ENCODE measurements at regions of chr16 and their contacts with region 1.

Region 1: DNA sequence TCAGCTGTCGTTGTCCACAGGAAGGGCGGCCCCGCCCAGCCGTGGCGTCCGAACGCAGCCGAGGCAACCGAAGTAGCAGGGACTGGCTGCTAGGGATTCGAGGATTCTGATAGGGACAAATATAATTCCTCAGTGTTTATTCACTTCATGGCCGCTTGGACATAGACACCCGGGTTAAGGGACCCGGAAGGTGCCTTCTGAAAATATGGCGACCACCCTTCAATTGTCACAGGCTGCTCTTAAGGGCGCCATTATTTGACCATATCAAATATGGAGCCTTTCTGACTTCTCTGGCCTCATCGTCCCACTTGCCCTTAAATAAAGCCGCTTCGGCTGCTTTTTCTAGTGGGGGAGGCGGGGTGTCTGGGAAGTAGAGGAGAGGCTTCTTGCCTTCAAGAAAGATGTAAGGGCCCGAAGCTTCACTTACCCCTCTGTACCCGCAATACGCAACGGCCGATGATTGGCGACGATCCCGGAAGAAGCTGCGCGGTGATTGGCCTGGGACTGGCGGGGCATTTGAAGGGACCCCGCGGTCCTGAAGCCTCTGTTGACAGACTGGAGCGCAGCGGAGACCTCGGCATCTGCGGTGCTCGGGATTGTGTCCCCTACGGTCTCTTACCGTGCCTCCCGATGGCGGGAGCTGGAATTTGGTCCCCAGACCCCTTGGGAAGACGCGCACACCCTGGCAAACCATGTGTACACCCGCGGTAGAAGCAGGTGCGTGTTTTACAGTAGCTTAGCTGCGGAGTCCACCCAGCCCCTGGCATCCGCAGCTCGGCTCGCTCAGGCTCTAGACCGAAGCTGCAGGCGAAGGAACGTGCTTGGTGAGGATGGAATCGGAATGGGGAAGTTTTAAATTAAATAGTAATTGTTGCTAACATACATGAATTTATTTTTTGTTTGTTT is at the start of gene ZNF688:
- DNase-seq: peak; percentile 98 to 99
- H3K4me3 ChIP-seq: peak within 1 kb of the TSS; percentile 12 to 93 (median 68)
- H3K27ac ChIP-seq: peak within 1 kb of the TSS; percentile 79 to 99 (median 95)
- H3K4me1 ChIP-seq: peaks cover 15 to 18% of the 10 kb centered on the region in 2 donors
- H3K27me3 ChIP-seq: no peaks in the 10 kb centered on the region
- CTCF ChIP-seq: peak in 1 of 6 experiments; percentile 29
- POLR2A ChIP-seq: peak in 1 of 2 donors; percentile 75
- total RNA-seq, gene ZNF688: 10.6 to 26.1 (median 16.5) TPM

Region 2: GRCh38 chr16:30407102-30407803 is 164.7 kb before region 1 on chr16 and contains the start of gene ZNF771:
- intact Hi-C with region 1: no loop called
- DNase-seq: peak; percentile 95
- H3K4me3 ChIP-seq: peak within 1 kb of the TSS; percentile 71 to 72 (median 72)
- H3K27ac ChIP-seq: peak within 1 kb of the TSS; percentile 51 to 72 (median 56)
- H3K4me1 ChIP-seq: peaks cover 5 to 19% of the 10 kb centered on the region in 2 donors
- H3K27me3 ChIP-seq: no peaks in the 10 kb centered on the region
- CTCF ChIP-seq: no peak
- POLR2A ChIP-seq: peak in 1 of 2 donors; percentile 63
- total RNA-seq, gene ZNF771: 9.1 to 29.5 (median 19.1) TPM

Region 3: DNA sequence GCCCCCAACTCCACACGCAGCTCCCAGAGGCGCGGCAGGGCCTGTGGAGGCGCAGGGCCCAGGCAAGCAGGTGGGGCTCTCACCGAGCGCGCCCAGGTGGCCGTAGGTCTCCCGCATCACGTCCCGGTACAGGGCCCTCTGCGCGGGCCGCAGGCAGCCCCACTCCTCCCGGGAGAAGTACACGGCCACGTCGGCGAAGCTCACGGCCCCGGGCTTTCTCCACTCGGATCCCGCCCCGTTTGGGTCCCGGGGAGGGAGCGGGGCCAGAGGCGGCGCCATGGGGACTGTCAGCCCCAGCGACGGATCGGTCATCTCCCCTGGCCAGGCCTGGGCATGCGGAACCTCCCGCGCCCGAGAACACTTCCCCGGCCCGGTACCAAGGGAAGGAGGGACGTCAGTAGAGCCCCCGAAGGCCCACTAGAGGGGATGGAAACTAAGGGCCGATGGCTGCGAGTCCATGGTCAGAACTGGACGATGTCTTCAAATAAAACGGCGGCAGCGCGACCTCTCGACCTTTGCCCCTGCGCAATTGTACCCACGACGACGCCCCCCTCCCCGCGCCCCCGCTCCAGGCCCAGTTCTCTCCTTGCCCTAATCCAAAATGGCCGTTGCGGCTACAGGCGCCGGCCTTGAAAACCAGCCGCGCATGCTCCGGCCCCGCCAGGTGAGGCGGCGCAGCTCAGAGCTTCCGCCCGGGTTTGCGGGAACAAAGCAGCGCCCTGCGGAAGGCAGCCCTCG is 37.4 kb before region 1 on chr16 and contains the start of gene ZNF747:
- intact Hi-C with region 1: loop called (anchors 5 kb)
- DNase-seq: peak; percentile 95
- H3K4me3 ChIP-seq: peak within 1 kb of the TSS; percentile 59 to 81 (median 73)
- H3K27ac ChIP-seq: peak within 1 kb of the TSS; percentile 77 to 92 (median 82)
- H3K4me1 ChIP-seq: peaks cover 16 to 17% of the 10 kb centered on the region in 2 donors
- H3K27me3 ChIP-seq: no peaks in the 10 kb centered on the region
- CTCF ChIP-seq: no peak
- POLR2A ChIP-seq: peak; percentile 32 to 78
- total RNA-seq, gene ZNF747: 13.6 to 30.7 (median 21.8) TPM

Region 4: DNA sequence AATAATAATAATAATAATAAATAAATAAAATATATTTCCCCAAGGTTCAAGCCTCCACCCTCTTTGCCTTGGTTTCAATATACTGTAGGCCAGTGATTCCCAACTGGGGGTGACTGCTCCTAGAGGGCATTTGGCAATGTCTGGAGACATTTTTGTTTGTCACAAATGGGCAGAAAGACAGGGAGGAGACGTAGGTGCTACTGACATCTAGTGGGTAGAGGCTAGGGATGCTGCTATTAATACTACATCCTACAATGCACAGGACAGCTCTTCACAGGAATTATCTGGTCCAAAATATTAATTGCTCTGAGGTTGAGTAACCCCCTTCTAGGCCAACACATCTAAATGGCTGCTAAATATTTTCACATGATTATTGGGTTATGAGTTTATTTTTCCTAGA is 66.0 kb after region 1 on chr16:
- intact Hi-C with region 1: loop called (anchors 10 kb)
- DNase-seq: no peak
- H3K4me3 ChIP-seq: no peak overlapping the region
- H3K27ac ChIP-seq: no peak overlapping the region
- H3K4me1 ChIP-seq: peaks cover 7 to 8% of the 10 kb centered on the region in 2 donors
- H3K27me3 ChIP-seq: no peaks in the 10 kb centered on the region
- CTCF ChIP-seq: peak in 3 of 6 experiments; percentile 9 to 15 (median 13)
- POLR2A ChIP-seq: no peak

Measured in thyroid gland (tissue), 4 donors.